ENCODE measurements at regions of chr18 and their contacts with region 1.

Region 1: DNA sequence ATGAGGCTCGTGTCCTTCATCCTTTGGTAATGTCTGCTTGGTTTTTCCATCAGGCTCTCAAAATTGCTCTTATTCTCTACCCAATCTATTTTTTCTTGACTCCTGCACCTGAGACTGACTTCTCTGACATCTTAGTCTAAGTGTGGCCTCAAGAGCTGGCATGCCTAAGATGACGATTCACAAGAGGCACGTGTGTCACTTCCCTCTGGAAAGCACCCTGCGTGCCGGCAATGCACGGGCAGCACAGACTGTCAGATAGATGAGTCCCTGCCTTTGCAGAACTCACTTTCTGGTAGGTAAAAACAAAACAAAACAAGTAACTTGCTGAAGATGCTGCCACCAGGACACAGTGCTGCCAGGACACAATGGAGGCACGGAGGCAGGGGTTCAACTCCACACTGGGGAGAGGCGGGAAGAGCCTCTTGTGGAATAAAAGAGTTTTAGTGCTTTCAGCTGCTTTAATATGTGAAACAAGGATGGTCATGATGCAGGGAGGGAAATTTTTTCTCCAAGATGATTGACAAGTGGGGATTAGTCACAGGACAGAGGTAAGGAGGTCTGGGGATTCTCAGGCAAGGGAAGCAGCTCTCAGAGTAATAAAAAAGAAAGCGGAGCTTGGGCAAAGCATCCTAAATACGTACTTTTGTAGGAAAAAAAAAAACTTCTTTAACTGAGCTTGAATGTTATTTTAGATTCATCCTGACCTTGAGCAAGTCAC is 27.3 kb downstream of the CYB5A start:
- DNase-seq: peak in 2 of 3 donors; percentile 47 to 64
- H3K4me3 ChIP-seq: no peak overlapping the region
- H3K4me3 Mint-ChIP-seq: no peak overlapping the region
- H3K27ac ChIP-seq: no peak overlapping the region
- H3K27ac Mint-ChIP-seq: peak overlapping the region in 5 of 7 donors; percentile 9 to 83 (median 39)
- H3K4me1 ChIP-seq: no peaks in the 10 kb centered on the region
- H3K4me1 Mint-ChIP-seq: peaks cover 11% of the 10 kb centered on the region
- H3K27me3 ChIP-seq: no peaks in the 10 kb centered on the region
- H3K27me3 Mint-ChIP-seq: peaks cover 0 to 2% (median 0%) of the 10 kb centered on the region in 3 donors
- CTCF ChIP-seq: no peak

Region 2: DNA sequence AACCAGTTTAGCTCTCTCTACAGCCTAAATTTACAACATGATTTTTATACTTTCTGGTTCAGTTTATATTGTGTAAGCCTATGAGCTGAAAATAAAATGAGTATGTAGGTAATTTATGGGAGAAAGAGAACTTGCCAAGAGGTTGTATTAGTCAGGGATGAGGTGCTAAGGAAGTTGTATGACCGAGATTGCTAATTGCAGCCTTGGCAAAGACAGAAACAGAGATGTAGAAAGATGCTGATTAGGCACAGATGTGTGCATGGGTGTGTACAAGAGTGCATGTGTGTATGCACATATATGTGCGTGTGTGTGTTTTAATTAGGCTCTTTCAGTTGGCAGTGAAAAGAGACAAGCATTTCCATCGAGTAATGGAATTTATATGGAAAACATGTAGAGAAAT is 330.8 kb before region 1 on chr18:
- intact Hi-C with region 1: no loop called
- DNase-seq: no peak
- H3K4me3 ChIP-seq: no peak overlapping the region
- H3K4me3 Mint-ChIP-seq: no peak overlapping the region
- H3K27ac ChIP-seq: no peak overlapping the region
- H3K27ac Mint-ChIP-seq: no peak overlapping the region
- H3K4me1 ChIP-seq: no peaks in the 10 kb centered on the region
- H3K4me1 Mint-ChIP-seq: no peaks in the 10 kb centered on the region
- H3K27me3 ChIP-seq: no peaks in the 10 kb centered on the region
- H3K27me3 Mint-ChIP-seq: peaks cover 0 to 5% (median 1%) of the 10 kb centered on the region in 3 donors
- CTCF ChIP-seq: no peak

Region 3: GRCh38 chr18:74217476-74218143 is 46.9 kb before region 1 on chr18:
- intact Hi-C with region 1: loop called in 1 of 2 experiments (anchors 5 kb)
- DNase-seq: no peak
- H3K4me3 ChIP-seq: no peak overlapping the region
- H3K4me3 Mint-ChIP-seq: no peak overlapping the region
- H3K27ac ChIP-seq: no peak overlapping the region
- H3K27ac Mint-ChIP-seq: no peak overlapping the region
- H3K4me1 ChIP-seq: no peaks in the 10 kb centered on the region
- H3K4me1 Mint-ChIP-seq: no peaks in the 10 kb centered on the region
- H3K27me3 ChIP-seq: no peaks in the 10 kb centered on the region
- H3K27me3 Mint-ChIP-seq: peaks cover 0 to 4% (median 3%) of the 10 kb centered on the region in 3 donors
- CTCF ChIP-seq: no peak